Ovary (tissue), 10 donors: ENCODE measurements at regions of chr18 and their contacts with region 1.

Region 1: GRCh38 chr18:50111265-50111792 is 83.6 kb downstream of the MYO5B start:
- DNase-seq: no peak
- H3K4me3 ChIP-seq: no peak overlapping the region
- H3K27ac ChIP-seq: no peak overlapping the region
- H3K4me1 ChIP-seq: no peaks in the 10 kb centered on the region
- H3K27me3 ChIP-seq: no peaks in the 10 kb centered on the region
- CTCF ChIP-seq: no peak
- EP300 ChIP-seq: no peak
- POLR2A ChIP-seq: no peak

Region 2: GRCh38 chr18:49013961-49014655 is 1097.2 kb before region 1 on chr18:
- intact Hi-C with region 1: loop called in 1 of 4 experiments (anchors 5 kb)
- DNase-seq: peak in 2 of 5 donors; percentile 9 to 12
- H3K4me3 ChIP-seq: no peak overlapping the region
- H3K27ac ChIP-seq: no peak overlapping the region
- H3K4me1 ChIP-seq: peaks cover 6% of the 10 kb centered on the region
- H3K27me3 ChIP-seq: no peaks in the 10 kb centered on the region
- CTCF ChIP-seq: no peak
- EP300 ChIP-seq: no peak
- POLR2A ChIP-seq: no peak

Region 3: GRCh38 chr18:50170004-50170403 is 58.7 kb after region 1 on chr18:
- intact Hi-C with region 1: no loop called
- DNase-seq: no peak
- H3K4me3 ChIP-seq: no peak overlapping the region
- H3K27ac ChIP-seq: no peak overlapping the region
- H3K4me1 ChIP-seq: no peaks in the 10 kb centered on the region
- H3K27me3 ChIP-seq: no peaks in the 10 kb centered on the region
- CTCF ChIP-seq: no peak
- EP300 ChIP-seq: no peak
- POLR2A ChIP-seq: no peak